Heart left ventricle (tissue), 16 donors: ENCODE measurements at regions of chr18 and their contacts with region 1.

Region 1: DNA sequence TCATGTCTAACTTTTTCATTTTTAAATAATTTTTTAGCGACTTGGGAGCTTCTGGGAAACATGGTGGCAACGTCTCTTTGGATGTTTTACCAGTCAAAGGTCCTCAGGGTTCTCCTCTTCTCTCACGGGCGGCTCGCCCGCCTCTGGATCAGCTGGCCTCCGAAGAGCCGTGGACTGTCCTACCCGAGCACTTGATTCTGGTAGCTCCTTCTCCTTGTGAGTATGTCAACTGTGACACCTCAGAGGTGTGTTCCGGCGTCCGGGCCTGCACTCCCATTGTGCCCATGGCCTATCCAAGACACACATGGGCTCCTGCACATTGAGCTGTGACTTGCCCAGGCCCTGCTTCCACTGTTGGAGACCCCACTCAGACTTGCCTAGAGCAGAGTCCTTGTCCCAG is 104.3 kb downstream of the CEP192 start:
- DNase-seq: no peak
- ATAC-seq: no peak
- H3K4me3 ChIP-seq: no peak overlapping the region
- H3K27ac ChIP-seq: no peak overlapping the region
- H3K4me1 ChIP-seq: peaks cover 0 to 5% (median 0%) of the 10 kb centered on the region in 12 donors
- H3K27me3 ChIP-seq: no peaks in the 10 kb centered on the region
- CTCF ChIP-seq: no peak
- POLR2A ChIP-seq: no peak

Region 2: DNA sequence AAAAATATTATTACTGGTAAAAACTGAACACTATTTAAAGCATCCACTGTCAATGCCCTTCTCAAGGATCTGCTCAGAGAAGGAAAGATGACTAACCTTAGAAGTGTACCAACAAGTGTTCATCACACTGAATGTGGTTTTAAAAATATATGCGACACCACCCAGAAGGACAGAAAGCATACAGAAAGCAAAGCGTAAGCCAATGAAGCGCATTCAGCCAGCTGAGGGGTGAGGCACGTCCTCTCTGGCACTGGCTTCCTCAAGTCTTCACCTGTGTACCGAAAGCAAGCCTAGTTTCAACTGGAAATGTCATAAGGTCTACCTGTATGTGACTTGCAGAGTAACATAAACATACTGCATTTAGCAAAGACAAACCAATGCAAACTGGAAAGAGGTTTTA is 303.9 kb before region 1 on chr18:
- intact Hi-C with region 1: no loop called
- DNase-seq: no peak
- ATAC-seq: no peak
- H3K4me3 ChIP-seq: no peak overlapping the region
- H3K27ac ChIP-seq: no peak overlapping the region
- H3K4me1 ChIP-seq: no peaks in the 10 kb centered on the region
- H3K27me3 ChIP-seq: no peaks in the 10 kb centered on the region
- CTCF ChIP-seq: no peak
- POLR2A ChIP-seq: no peak

Region 3: GRCh38 chr18:13011719-13012118 is 83.7 kb before region 1 on chr18:
- intact Hi-C with region 1: loop called in 4 of 10 experiments (anchors 5 to 10 kb)
- DNase-seq: no peak
- ATAC-seq: no peak
- H3K4me3 ChIP-seq: no peak overlapping the region
- H3K27ac ChIP-seq: no peak overlapping the region
- H3K4me1 ChIP-seq: peaks cover 0 to 28% (median under 1%) of the 10 kb centered on the region in 12 donors
- H3K27me3 ChIP-seq: no peaks in the 10 kb centered on the region
- CTCF ChIP-seq: no peak
- POLR2A ChIP-seq: no peak

Region 4: DNA sequence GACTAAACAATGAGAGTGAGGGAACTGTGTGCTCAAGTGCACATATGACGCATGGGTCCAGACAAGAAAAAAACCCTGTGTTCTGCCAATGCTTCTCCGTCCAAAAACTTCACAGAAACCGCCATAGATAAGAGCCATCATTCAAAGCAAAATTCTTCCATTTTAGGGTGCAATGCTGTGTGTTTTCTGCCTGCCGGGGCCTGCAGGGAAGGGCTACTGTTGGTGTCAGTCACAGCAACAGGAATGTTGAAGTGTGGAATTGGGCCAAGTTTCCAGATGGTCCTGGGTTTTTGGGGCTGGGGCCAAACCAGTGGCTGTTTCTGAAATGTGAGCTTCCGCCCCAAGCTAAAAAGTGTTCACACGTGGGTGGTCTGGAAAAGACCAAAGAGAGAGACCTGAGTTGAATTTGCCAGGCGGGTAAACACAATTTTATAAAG is 820.5 kb after region 1 on chr18:
- intact Hi-C with region 1: no loop called
- DNase-seq: peak in 4 of 5 donors; percentile 23 to 52 (median 37)
- ATAC-seq: peak; percentile 45 to 90 (median 75)
- H3K4me3 ChIP-seq: no peak overlapping the region
- H3K27ac ChIP-seq: peak overlapping the region in 1 of 12 donors; percentile 10
- H3K4me1 ChIP-seq: peaks cover 0 to 9% (median 0%) of the 10 kb centered on the region in 12 donors
- H3K27me3 ChIP-seq: no peaks in the 10 kb centered on the region
- CTCF ChIP-seq: no peak
- POLR2A ChIP-seq: no peak